Activated naive CD8-positive, alpha-beta T cell treated with anti-CD3 and anti-CD28 coated beads, Interleukin-2, amount 10 ng/mL, durations not matched to agents 7 days and 5 days (primary cell): ENCODE measurements at regions of chr11 and their contacts with region 1.

Region 1: DNA sequence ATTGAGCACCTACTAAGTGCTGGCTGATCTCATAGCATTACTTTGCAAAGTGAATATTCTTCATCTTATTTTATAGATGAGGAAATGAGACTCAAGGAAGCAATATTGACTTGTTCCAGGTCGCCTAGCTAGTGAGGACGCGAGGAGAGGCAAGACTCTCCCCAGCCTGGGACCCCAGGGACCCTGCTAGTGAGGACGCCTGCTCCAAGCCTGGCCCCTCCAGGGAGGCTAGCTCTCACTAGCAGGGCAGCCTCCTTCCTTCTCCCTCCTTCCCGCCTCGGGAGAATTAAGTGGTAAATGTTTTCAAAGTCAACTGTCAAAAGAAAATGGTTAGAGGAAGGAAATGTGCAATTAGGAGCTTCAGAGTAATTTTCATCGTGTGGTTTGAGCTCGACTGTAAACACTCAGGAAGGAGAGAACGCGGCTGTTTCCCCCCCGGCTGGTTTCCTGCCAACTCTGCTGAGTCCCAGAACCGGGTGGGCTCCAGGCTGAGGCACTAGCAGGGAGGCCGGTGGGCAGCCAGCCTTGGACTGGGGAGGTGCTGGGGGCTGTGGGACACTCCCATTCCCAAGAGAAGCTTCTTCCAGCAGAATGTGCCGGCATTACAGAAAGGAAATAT is 17.9 kb downstream of the MYEOV start:
- DNase-seq: peak; percentile 52
- ATAC-seq: peak; percentile 76
- H3K4me3 Mint-ChIP-seq: peak overlapping the region; percentile 65
- H3K27ac Mint-ChIP-seq: peak overlapping the region; percentile 92
- H3K4me1 Mint-ChIP-seq: peaks cover 14% of the 10 kb centered on the region
- H3K27me3 Mint-ChIP-seq: no peaks in the 10 kb centered on the region

Region 2: DNA sequence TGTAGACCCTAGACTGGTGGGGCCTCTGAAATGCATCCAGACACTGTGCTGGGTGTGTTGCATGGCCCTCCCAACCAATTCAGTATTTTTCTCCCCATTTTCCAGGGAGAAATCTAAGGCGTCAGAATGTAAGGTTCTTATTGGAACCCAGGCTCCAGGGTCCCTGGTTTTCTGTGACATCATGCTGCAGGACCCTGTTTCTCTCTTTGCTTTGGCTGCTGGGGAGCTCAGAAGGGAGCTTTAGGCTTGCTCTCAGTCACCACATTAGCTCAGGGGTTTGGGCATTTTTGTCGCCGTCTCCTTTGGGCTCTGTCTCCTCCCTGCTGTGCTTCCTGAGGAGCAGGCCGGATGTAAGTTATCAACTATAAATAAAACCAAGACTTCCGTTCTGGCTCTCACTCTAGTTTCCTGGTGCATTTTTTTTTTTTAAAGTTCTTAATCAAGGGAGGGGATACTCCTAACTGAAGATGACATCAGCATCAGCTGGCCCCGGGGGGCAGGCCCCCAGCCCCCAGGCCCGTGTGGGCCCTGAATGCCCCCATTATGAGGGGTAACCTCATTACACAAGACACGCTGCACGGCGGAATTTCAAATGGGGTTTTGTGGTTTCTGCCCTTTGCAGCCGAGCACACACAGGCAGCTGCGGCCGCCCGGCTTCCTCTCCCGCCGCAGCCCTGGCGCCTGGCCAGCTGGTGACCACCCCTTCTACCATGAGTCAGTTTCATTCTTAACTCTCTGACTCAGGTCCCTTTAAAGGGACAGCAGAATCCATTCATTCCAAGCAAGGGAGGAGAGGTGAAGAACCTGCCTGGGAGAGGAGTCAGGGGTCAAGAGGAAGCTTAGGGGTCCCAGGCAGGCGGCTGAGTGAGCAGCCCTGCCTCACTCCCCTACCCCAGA is 14.7 kb before region 1 on chr11:
- POLR2A ChIA-PET with region 1: interaction called, 30 read pairs
- DNase-seq: peak; percentile 91
- ATAC-seq: peak; percentile 72
- H3K4me3 Mint-ChIP-seq: peak overlapping the region; percentile 87
- H3K27ac Mint-ChIP-seq: peak overlapping the region; percentile 98
- H3K4me1 Mint-ChIP-seq: peaks cover 42% of the 10 kb centered on the region
- H3K27me3 Mint-ChIP-seq: peaks cover 4% of the 10 kb centered on the region

Region 3: DNA sequence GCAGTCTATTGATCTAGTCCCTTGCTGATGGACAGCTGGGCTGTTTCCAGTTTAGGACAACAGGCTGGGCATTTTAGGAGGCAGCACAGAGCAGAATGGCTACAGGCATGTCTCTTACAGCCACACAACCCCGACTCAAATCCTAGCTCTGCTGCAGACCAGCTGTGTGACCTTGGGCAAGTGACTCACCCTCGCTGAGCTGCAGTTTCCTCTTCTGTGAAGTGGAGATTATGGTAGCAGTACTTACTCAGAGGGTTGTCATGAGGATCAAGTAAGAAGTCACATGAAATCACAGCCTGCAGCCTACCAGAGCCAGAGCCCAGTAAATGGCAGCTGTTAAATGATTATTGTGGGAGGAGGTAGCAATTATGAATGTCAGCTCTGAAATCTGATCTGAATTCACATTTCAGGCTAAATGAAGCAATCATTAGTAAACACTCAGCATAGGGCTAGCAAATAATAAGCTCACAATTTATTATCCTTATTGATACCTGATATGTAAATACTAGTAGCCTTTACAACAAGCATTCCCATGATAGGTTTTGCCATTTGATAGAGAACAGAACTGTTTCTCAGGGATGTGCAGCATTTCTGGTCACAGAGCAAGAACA is 40.9 kb after region 1 on chr11:
- POLR2A ChIA-PET with region 1: no interaction called
- DNase-seq: no peak
- ATAC-seq: peak; percentile 66
- H3K4me3 Mint-ChIP-seq: no peak overlapping the region
- H3K27ac Mint-ChIP-seq: no peak overlapping the region
- H3K4me1 Mint-ChIP-seq: peaks cover 3% of the 10 kb centered on the region
- H3K27me3 Mint-ChIP-seq: peaks cover 10% of the 10 kb centered on the region